ENCODE measurements at regions of chr17 and their contacts with region 1.

Region 1: DNA sequence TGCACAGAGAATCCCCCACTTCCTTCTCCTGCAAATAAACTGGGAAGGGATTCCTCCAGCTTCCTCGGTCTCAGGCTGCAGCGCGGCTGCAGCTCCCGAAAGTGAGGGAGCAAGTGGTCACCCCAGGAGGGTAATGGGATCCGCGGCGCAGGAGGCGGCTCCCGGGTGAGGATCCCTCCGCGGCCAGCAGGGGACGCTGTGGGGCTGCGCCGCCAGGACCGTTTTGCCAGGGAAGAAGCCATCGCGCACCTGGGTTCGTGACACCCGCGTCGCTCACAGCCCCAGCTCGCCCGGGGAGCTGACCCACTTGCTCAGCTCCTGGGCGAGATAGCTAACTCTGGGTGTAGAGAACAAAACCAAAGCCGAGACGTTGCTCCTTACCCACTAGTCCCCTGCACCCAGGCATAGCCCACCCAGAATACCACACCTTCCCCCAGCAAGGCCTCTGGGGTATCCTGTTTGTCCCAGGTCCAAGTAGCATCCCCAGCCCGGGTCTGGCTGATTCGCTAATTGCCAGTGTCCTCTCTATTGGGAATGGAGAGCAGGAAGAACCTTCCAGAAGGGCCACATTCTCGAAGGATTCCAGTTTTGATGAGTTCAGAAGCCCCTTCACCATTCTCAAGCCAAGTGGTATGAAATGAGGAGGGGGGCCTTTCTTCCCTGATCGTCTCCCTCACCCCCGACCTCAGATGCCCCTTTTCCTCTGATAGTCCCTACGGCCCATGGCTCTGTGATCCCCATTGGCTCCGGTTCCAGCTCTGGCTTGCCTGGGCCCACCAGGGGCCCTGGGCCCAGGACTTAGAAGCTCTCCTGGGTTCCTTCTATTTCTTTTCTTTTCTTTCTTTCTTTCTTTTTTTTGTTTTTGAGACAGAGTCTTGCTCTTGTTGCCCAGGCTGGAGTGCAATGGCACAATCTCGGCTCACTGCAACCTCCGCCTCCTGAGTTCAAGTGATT is 14.1 kb downstream of the CYGB start:
- DNase-seq: peak; percentile 66 to 86 (median 78)
- H3K4me3 ChIP-seq: no peak overlapping the region
- H3K27ac ChIP-seq: no peak overlapping the region
- H3K4me1 ChIP-seq: peaks cover 20% of the 10 kb centered on the region
- H3K27me3 ChIP-seq: no peaks in the 10 kb centered on the region
- CTCF ChIP-seq: peak; percentile 98 to 99 (median 99)
- EP300 ChIP-seq: no peak
- POLR2A ChIP-seq: no peak

Region 2: GRCh38 chr17:76547184-76547641 is 23.9 kb after region 1 on chr17:
- intact Hi-C with region 1: loop called in 3 of 4 experiments (anchors 1 to 2 kb)
- DNase-seq: peak; percentile 62 to 84 (median 70)
- H3K4me3 ChIP-seq: no peak overlapping the region
- H3K27ac ChIP-seq: no peak overlapping the region
- H3K4me1 ChIP-seq: peaks cover 34% of the 10 kb centered on the region
- H3K27me3 ChIP-seq: no peaks in the 10 kb centered on the region
- CTCF ChIP-seq: peak; percentile 50 to 84 (median 79)
- EP300 ChIP-seq: no peak
- POLR2A ChIP-seq: no peak

Region 3: DNA sequence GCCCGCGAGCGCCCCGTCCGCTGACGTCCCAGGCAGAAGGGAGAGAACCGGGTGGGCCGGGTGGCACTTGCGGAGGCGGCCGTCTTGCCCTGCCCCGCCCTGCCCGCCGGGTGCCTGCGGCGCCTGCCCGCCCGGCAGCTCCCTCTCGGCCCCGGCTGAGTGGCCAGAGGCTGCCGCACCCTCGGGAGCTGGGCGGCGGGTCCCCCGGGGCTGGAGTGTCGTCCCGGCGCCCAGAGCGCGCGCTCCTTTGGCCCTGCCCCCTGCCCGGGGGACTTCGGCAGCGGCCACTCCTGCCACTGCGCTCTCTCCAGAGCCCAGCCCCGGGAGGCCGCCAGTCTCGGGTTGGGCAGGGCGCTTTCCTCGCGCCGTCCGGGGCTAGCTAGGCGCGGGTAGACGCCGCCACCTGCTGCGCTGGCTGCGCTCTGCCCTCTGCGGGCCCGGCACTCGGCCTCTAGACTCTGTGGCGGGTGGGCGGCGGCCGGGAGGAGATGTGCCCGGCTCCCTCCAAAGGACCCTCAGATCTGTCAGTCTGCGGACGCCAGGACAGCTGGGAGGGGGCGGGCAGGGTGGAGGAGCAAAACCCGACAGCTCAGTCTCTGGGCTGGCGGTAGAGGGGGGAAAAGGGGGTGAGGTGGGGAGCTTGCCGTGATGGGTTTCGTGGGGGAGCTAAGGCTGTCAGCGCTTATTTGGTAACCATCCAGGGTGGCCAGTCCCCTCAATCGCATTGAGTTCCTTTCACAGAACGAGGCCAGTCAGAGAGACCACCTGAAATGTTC is 62.6 kb after region 1 on chr17 and contains the start of gene ST6GALNAC2:
- intact Hi-C with region 1: loop called in 1 of 4 experiments (anchors 2 kb)
- DNase-seq: peak; percentile 42 to 73 (median 62)
- H3K4me3 ChIP-seq: peak within 1 kb of the TSS; percentile 47
- H3K27ac ChIP-seq: no peak within 1 kb of the TSS
- H3K4me1 ChIP-seq: peaks cover 7% of the 10 kb centered on the region
- H3K27me3 ChIP-seq: no peaks in the 10 kb centered on the region
- CTCF ChIP-seq: peak; percentile 9 to 37 (median 29)
- EP300 ChIP-seq: no peak
- POLR2A ChIP-seq: no peak
- total RNA-seq, gene ST6GALNAC2: 1.9 to 61.6 (median 4.9) TPM

Region 4: DNA sequence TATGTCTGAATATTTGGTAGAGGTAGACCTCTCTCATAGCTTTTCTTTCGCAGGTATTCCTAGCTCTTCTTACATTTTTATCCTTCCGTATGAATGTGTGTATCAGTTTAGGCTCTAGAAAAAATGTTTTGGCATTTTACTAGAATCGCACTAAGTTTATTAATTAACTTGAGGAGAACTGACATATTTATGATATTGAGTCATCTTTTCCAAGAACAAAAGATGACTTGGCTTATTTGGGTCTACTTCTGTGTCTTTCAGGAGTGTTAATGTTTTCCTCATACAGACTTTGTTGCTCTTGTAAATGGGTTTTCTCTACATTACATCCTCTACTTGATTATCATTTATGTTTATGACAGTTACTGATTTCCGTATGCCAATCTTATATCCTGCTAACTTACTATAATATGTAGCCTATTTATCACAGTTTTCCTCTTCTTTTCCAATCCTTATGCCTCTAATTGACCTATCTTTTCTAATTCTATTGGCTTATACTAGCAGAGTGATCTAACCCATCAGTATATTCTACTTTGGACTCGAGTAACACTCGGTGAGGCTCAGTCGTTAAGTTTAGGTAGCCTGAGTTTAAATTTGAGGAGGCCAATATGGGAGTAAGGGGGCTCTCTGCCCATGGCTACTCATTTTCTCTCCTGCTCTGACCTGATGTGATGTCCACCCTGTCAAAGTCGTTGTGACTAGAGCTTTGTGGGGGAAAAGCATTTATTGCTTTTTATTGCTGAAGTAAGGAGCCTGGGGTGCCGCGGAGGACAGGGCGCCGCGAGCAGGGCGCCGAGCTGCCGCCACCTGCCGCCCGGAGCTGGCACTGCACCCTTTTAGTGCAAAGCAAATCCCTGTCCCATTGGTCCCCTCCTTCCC is 100.1 kb after region 1 on chr17:
- intact Hi-C with region 1: loop called in 3 of 4 experiments (anchors 5 to 10 kb)
- DNase-seq: peak; percentile 62 to 87 (median 79)
- H3K4me3 ChIP-seq: no peak overlapping the region
- H3K27ac ChIP-seq: no peak overlapping the region
- H3K4me1 ChIP-seq: no peaks in the 10 kb centered on the region
- H3K27me3 ChIP-seq: no peaks in the 10 kb centered on the region
- CTCF ChIP-seq: peak; percentile 71 to 95 (median 78)
- EP300 ChIP-seq: no peak
- POLR2A ChIP-seq: no peak

Region 5: GRCh38 chr17:76681222-76682137 is 158.1 kb after region 1 on chr17:
- intact Hi-C with region 1: loop called in 1 of 4 experiments (anchors 10 kb)
- DNase-seq: peak; percentile 74 to 84 (median 82)
- H3K4me3 ChIP-seq: no peak overlapping the region
- H3K27ac ChIP-seq: peak overlapping the region; percentile 57 to 59
- H3K4me1 ChIP-seq: peaks cover 16% of the 10 kb centered on the region
- H3K27me3 ChIP-seq: no peaks in the 10 kb centered on the region
- CTCF ChIP-seq: peak; percentile 50 to 67 (median 65)
- EP300 ChIP-seq: no peak
- POLR2A ChIP-seq: no peak

Region 6: GRCh38 chr17:76714822-76715495 is 191.6 kb after region 1 on chr17:
- intact Hi-C with region 1: loop called in 2 of 4 experiments (anchors 5 kb)
- DNase-seq: peak; percentile 76 to 89 (median 86)
- H3K4me3 ChIP-seq: no peak overlapping the region
- H3K27ac ChIP-seq: no peak overlapping the region
- H3K4me1 ChIP-seq: peaks cover 2% of the 10 kb centered on the region
- H3K27me3 ChIP-seq: no peaks in the 10 kb centered on the region
- CTCF ChIP-seq: peak; percentile 75 to 86 (median 84)
- EP300 ChIP-seq: no peak
- POLR2A ChIP-seq: no peak